Activated CD8-positive, alpha-beta T cell treated with anti-CD3 and anti-CD28 coated beads, Interleukin-2, amount 10 ng/mL, durations not matched to agents 7 days and 5 days (primary cell): ENCODE measurements at regions of chr10 and their contacts with region 1.

Region 1: DNA sequence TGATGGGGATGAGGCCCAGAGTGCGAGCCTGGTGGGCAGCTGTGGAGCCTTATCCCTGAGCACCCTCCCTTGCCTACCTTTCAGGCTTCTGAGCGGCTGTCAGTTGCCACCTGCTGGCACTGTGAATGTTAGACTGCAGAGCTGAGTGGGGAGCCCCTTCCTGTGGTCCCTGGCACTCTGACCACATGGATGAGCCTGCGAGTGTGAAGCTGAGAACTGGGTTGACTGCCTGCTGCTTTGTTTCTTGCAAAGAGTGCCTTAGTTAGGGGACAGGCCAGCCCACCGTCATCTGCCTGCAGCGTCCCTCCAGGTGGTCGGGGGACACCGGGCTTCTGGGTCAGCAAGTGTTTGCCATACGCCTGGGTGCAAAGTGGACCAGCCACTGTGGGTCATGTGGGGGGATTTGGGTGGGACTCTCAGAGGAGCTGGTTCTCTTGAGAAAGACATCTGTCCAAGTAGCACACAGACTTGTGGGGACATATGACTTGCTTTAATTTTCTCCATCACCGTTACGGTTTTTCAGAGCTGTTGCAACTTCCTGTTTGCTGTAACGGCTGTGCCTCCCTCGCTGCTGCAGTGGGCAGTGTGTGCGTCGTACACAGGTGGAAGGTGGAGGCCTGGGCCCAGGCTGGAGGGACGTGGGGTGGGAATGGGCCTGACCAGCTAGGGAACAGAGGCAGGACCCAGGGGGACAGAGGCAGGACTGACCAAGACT is 13.7 kb downstream of the INPP5A start:
- DNase-seq: peak; percentile 63
- ATAC-seq: peak; percentile 68
- H3K4me3 Mint-ChIP-seq: peak overlapping the region; percentile 45
- H3K27ac Mint-ChIP-seq: peak overlapping the region; percentile 87
- H3K4me1 Mint-ChIP-seq: peaks cover 38% of the 10 kb centered on the region
- H3K27me3 Mint-ChIP-seq: no peaks in the 10 kb centered on the region

Region 2: DNA sequence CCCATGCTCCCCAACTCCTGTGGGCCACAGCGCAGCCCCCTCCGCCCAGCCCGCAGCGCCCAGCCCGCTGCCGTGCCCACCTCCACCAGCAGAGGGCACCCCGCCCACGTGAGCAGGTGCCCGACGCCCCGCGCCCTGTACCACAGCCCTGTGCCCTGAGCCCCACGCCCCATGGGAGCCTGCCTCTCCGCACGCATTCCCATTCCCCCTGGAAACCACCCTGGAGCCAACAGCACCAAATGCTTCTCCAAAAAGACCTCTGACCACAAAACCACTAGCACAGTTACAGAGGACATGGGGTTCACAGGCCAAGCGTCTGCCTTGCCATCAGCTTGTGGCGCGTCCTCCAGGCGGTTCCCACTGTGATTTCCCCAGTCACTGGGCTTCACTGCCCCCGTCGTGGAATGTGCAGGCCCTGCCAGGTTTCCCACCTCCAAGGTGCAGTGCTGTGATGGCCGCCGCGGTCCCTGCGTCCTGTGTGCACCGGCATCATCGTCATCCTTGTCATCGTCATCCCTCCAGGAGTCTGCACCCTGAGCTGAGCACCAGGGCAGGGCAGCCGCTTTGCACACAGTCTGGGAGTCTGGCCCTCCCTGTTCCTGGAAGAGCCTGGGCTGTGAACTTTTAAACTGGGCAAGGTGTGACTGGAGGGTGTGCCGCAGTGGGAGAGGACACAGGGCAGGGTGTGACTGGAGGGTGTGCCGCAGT is 92.5 kb before region 1 on chr10:
- CTCF ChIA-PET with region 1: interaction called, 11 read pairs
- POLR2A ChIA-PET with region 1: no interaction called
- DNase-seq: peak; percentile 64
- ATAC-seq: peak; percentile 77
- H3K4me3 Mint-ChIP-seq: no peak overlapping the region
- H3K27ac Mint-ChIP-seq: no peak overlapping the region
- H3K4me1 Mint-ChIP-seq: peaks cover 2% of the 10 kb centered on the region
- H3K27me3 Mint-ChIP-seq: no peaks in the 10 kb centered on the region

Region 3: DNA sequence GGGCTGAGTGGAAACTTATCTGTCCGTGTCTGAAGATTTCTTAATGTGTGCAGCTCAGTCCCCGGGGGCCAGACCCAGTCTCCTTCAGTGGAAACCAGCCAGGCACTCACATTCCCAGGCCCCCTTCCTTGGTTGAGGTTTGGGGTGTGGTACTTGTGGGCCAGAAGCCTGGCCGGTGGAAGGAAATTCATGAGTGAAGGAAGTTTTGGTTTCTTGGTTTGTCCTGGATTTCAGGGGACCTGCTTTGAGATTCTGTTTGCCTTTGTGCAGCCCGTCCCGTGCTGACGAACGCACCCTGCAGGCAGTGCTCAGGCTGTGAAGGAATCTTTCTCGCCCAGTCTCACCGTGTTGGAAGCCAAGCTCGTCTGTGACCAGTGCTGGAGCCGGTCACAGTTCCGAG is 10.8 kb before region 1 on chr10:
- CTCF ChIA-PET with region 1: interaction called, 33 read pairs
- POLR2A ChIA-PET with region 1: interaction called, 23 read pairs
- DNase-seq: no peak
- ATAC-seq: no peak
- H3K4me3 Mint-ChIP-seq: peak overlapping the region; percentile 84
- H3K27ac Mint-ChIP-seq: peak overlapping the region; percentile 74
- H3K4me1 Mint-ChIP-seq: peaks cover 69% of the 10 kb centered on the region
- H3K27me3 Mint-ChIP-seq: no peaks in the 10 kb centered on the region

Region 4: GRCh38 chr10:132571650-132572535 is 20.6 kb after region 1 on chr10:
- CTCF ChIA-PET with region 1: interaction called, 10 read pairs
- POLR2A ChIA-PET with region 1: interaction called, 3 read pairs
- DNase-seq: peak; percentile 82
- ATAC-seq: peak; percentile 88
- H3K4me3 Mint-ChIP-seq: peak overlapping the region; percentile 34
- H3K27ac Mint-ChIP-seq: peak overlapping the region; percentile 79
- H3K4me1 Mint-ChIP-seq: peaks cover 8% of the 10 kb centered on the region
- H3K27me3 Mint-ChIP-seq: peaks cover 2% of the 10 kb centered on the region